Heart right ventricle (tissue), 16 donors: ENCODE measurements at regions of chr4 and their contacts with region 1.

Region 1: DNA sequence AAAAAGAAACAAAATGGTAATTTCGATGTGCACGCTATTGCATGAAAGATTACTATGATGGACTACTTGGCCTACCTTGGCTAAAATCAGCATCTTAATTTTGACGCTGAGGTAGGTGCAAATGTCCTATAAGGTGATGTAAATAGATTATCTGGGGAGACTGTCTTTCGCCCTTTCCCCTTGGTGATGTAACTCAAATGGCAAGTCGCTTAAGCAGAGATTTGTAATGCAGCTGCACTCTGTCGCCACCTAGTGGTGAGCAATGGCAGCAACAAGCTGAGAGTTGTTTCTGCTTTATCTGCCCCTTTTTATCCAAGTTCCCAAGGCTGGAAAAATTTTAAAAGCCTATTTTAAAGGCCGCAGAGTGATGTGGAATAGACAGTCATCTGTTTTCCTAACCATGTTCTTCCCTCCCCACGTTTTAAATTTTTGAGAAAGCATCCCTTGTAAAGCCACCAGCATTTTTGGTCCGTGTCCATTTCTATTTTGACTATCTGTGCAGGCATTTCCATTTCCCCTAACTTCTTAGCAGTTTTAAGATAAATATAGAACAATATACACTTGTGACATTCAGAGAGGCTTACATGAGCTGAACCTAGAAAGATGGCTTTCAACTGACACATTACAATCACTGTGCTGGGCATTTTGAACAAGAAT is 62.4 kb upstream of the PDLIM3 start:
- DNase-seq: peak; percentile 72 to 82
- ATAC-seq: peak; percentile 2 to 78 (median 50)
- H3K4me3 ChIP-seq: no peak overlapping the region
- H3K27ac ChIP-seq: peak overlapping the region in 9 of 10 donors; percentile 9 to 67 (median 46)
- H3K4me1 ChIP-seq: peaks cover 3 to 61% (median 38%) of the 10 kb centered on the region in 9 donors
- H3K27me3 ChIP-seq: peaks cover 0 to 3% (median 0%) of the 10 kb centered on the region in 7 donors
- CTCF ChIP-seq: peak; percentile 98 to 100 (median 98)

Region 2: GRCh38 chr4:185203486-185204237 is 394.0 kb before region 1 on chr4 and contains the start of gene CFAP97:
- intact Hi-C with region 1: loop called in 2 of 10 experiments (anchors 5 to 10 kb)
- DNase-seq: peak; percentile 90 to 92
- ATAC-seq: peak; percentile 92 to 96 (median 94)
- H3K4me3 ChIP-seq: peak within 1 kb of the TSS; percentile 42 to 86 (median 79)
- H3K27ac ChIP-seq: peak within 1 kb of the TSS; percentile 93 to 99 (median 98)
- H3K4me1 ChIP-seq: peaks cover 6 to 39% (median 27%) of the 10 kb centered on the region in 9 donors
- H3K27me3 ChIP-seq: peaks cover 0 to 7% (median 0%) of the 10 kb centered on the region in 7 donors
- CTCF ChIP-seq: peak in 3 of 9 donors; percentile 9 to 24 (median 18)
- total RNA-seq, gene CFAP97: 10.6 to 20.9 (median 13.0) TPM

Region 3: GRCh38 chr4:185209031-185209851 is 388.4 kb before region 1 on chr4 and contains the start of gene SNX25:
- intact Hi-C with region 1: loop called in 2 of 10 experiments (anchors 5 to 10 kb)
- DNase-seq: peak; percentile 85 to 90
- ATAC-seq: peak; percentile 94 to 98 (median 96)
- H3K4me3 ChIP-seq: peak within 1 kb of the TSS; percentile 54 to 94 (median 70)
- H3K27ac ChIP-seq: peak within 1 kb of the TSS; percentile 65 to 91 (median 87)
- H3K4me1 ChIP-seq: peaks cover 6 to 35% (median 27%) of the 10 kb centered on the region in 9 donors
- H3K27me3 ChIP-seq: peaks cover 0 to 43% (median 0%) of the 10 kb centered on the region in 7 donors
- CTCF ChIP-seq: peak in 4 of 9 donors; percentile 32 to 57 (median 41)
- total RNA-seq, gene SNX25: 7.4 to 12.6 (median 9.8) TPM

Region 4: GRCh38 chr4:185425647-185426352 is 171.9 kb before region 1 on chr4 and contains the start of gene UFSP2:
- intact Hi-C with region 1: loop called in 2 of 10 experiments (anchors 5 to 10 kb)
- DNase-seq: peak; percentile 89 to 90
- ATAC-seq: peak; percentile 97 to 99 (median 98)
- H3K4me3 ChIP-seq: peak within 1 kb of the TSS; percentile 50 to 89 (median 75)
- H3K27ac ChIP-seq: peak within 1 kb of the TSS; percentile 89 to 97 (median 95)
- H3K4me1 ChIP-seq: peaks cover 0 to 48% (median 32%) of the 10 kb centered on the region in 9 donors
- H3K27me3 ChIP-seq: no peaks in the 10 kb centered on the region
- CTCF ChIP-seq: no peak
- total RNA-seq, gene UFSP2: 29.4 to 52.4 (median 43.7) TPM

Region 5: GRCh38 chr4:185534866-185535611 is 62.6 kb before region 1 on chr4 and contains the start of gene PDLIM3:
- intact Hi-C with region 1: loop called in 3 of 10 experiments (anchors 2 to 5 kb)
- DNase-seq: peak; percentile 72 to 80
- ATAC-seq: peak; percentile 80 to 95 (median 86)
- H3K4me3 ChIP-seq: peak within 1 kb of the TSS; percentile 63 to 95 (median 79)
- H3K27ac ChIP-seq: peak within 1 kb of the TSS; percentile 90 to 99 (median 95)
- H3K4me1 ChIP-seq: peaks cover 0 to 34% (median 14%) of the 10 kb centered on the region in 9 donors
- H3K27me3 ChIP-seq: peaks cover 0 to 52% (median 4%) of the 10 kb centered on the region in 7 donors
- CTCF ChIP-seq: peak in 1 of 9 donors; percentile 32
- total RNA-seq, gene PDLIM3: 112 to 846 (median 292) TPM

Region 6: DNA sequence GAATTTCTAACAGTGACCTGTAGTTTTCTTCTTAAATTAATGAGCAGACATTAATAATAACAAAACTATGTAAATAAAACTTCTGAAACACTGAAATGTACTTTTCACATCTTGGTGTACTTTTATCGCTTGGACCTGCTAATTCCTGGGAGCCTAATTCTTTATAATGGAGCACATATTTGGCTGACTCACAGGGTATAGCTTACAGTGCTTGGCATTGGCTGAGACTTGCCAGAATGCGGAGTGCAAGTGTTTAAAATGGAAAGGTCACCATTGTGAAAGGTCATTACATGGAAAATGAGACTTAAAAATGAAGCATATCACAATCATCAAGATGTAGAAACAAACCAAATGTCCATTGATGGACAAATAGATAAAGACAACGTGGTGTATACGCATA is 75.0 kb after region 1 on chr4:
- intact Hi-C with region 1: no loop called
- DNase-seq: no peak
- ATAC-seq: peak in 3 of 8 donors; percentile 29 to 36 (median 33)
- H3K4me3 ChIP-seq: no peak overlapping the region
- H3K27ac ChIP-seq: peak overlapping the region in 7 of 10 donors; percentile 2 to 60 (median 45)
- H3K4me1 ChIP-seq: peaks cover 0 to 71% (median 27%) of the 10 kb centered on the region in 9 donors
- H3K27me3 ChIP-seq: no peaks in the 10 kb centered on the region
- CTCF ChIP-seq: no peak

Region 7: DNA sequence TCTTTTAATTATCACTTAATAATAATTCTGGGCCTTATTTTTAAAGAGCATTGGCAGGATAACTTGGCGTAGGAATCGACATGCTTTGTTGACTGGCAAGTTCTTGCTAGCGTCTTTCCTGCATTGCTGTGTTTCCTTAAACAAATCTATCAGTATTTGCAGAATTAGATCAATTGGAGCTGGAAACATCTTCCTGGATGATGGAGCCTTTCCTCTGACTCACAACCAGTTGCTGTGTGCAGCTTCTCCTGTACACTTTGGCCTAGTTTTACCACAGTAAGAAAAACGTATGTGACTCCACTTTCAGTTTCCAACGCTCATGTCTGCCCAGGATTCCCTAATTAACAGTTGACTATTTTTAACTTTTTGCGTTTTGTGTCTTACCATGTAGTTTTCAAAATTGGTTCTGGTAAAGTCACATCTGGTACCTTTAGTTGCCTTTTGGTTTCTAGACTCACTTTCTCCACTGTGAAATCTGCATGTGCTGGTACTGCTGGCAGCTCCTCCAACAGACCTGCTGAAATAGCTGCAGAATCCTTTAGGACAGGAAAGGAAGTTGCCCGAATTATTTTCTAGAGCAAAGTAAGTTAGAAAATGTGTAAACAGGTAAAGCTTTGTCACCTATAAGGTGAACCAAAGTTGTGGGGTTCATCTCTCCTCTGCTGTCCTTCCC is 1679.2 kb after region 1 on chr4:
- intact Hi-C with region 1: no loop called
- DNase-seq: no peak
- ATAC-seq: no peak
- H3K4me3 ChIP-seq: no peak overlapping the region
- H3K27ac ChIP-seq: no peak overlapping the region
- H3K4me1 ChIP-seq: no peaks in the 10 kb centered on the region
- H3K27me3 ChIP-seq: no peaks in the 10 kb centered on the region
- CTCF ChIP-seq: no peak